Caco-2 (cell line): ENCODE measurements at regions of chr11 and their contacts with region 1.

Region 1: GRCh38 chr11:86955361-86956120 is at the start of gene FZD4:
- DNase-seq: peak; percentile 96 to 99
- H3K4me3 ChIP-seq: peak within 1 kb of the TSS; percentile 94
- H3K4me3 Mint-ChIP-seq: peak within 1 kb of the TSS; percentile 93
- H3K27ac Mint-ChIP-seq: peak within 1 kb of the TSS; percentile 90
- H3K4me1 ChIP-seq: peaks cover 15% of the 10 kb centered on the region
- H3K4me1 Mint-ChIP-seq: peaks cover 22% of the 10 kb centered on the region
- H3K27me3 ChIP-seq: no peaks in the 10 kb centered on the region
- H3K27me3 Mint-ChIP-seq: no peaks in the 10 kb centered on the region
- CTCF ChIP-seq: peak; percentile 5 to 64
- total RNA-seq, gene FZD4: 60.6 and 78.4 TPM in 2 replicates

Region 2: DNA sequence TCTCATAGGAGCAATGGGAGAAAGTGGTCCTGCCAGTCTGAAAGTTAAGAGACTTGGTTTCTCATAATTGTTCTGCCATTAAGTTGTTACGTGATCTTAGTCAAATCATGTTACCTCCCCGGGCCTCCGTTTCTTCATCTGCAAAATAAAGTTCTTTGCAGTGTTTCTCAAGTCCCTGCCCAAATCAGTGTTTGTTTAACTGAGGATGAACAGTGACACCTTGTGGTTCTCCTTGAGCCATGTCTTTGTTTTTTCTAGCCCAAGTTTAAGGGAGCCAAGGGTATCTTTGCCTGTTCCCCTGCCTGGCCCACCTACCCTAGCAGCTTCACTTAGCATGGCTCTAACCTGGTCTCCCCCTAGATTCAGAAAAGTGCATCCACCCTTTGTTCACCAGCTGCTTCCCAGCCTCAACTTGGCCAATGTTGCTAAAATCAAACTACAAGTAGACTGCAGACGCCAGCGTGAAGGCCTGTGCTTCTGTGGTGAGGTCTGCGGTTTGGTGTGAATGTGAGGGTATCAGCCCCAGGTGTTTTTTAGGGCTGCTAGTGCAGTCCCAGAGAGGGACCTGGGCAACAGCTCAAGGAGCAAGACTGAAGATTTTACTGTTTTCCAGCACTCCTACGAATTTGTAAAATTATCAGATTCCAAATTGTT is 35.9 kb before region 1 on chr11:
- CTCF ChIA-PET with region 1: no interaction called
- POLR2A ChIA-PET with region 1: interaction called, 10 read pairs
- intact Hi-C with region 1: loop called (anchors 1 kb)
- DNase-seq: peak; percentile 60 to 77
- H3K4me3 ChIP-seq: no peak overlapping the region
- H3K4me3 Mint-ChIP-seq: no peak overlapping the region
- H3K27ac Mint-ChIP-seq: no peak overlapping the region
- H3K4me1 ChIP-seq: peaks cover 32% of the 10 kb centered on the region
- H3K4me1 Mint-ChIP-seq: peaks cover 30% of the 10 kb centered on the region
- H3K27me3 ChIP-seq: no peaks in the 10 kb centered on the region
- H3K27me3 Mint-ChIP-seq: no peaks in the 10 kb centered on the region
- CTCF ChIP-seq: peak; percentile 91 to 95

Region 3: DNA sequence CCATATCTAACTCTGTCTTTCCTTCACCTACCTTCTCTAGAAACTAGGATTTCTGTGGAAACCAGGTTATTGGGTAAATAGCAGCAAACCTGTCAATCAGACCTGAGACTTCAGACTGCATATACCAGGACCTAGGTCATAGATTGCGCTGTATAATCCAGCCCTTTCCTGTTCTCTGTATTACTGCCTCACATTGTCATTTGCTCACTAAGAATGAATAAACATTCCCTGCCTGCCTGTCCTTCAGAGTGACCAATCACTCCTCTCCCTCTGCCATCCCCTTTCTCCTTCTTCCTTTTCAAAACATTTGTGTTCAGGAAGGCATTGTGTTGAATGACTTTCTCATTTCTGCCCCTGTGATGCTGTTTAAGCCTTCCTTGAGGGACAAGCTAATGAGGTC is 13.7 kb after region 1 on chr11:
- CTCF ChIA-PET with region 1: no interaction called
- POLR2A ChIA-PET with region 1: no interaction called
- intact Hi-C with region 1: loop called (anchors 1 kb)
- DNase-seq: no peak
- H3K4me3 ChIP-seq: no peak overlapping the region
- H3K4me3 Mint-ChIP-seq: no peak overlapping the region
- H3K27ac Mint-ChIP-seq: no peak overlapping the region
- H3K4me1 ChIP-seq: no peaks in the 10 kb centered on the region
- H3K4me1 Mint-ChIP-seq: no peaks in the 10 kb centered on the region
- H3K27me3 ChIP-seq: no peaks in the 10 kb centered on the region
- H3K27me3 Mint-ChIP-seq: no peaks in the 10 kb centered on the region
- CTCF ChIP-seq: no peak

Region 4: DNA sequence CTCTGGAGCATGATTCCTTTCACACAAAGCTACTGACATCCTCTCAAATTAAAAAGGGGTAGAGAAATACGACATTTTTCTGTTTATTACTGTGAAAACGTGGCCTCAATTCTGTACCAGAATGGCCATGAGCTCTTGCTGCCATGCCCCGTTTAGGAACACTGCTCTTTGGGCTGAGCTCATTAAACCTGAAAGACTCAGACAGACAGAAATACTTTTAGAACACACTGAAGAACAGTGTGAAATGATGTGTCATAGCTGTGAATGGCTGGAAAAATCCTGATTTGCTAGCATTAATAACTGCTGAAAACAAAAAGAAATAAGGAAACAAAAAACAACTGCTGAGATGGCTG is 50.0 kb after region 1 on chr11:
- CTCF ChIA-PET with region 1: interaction called, 32 read pairs
- POLR2A ChIA-PET with region 1: interaction called, 15 read pairs
- intact Hi-C with region 1: loop called (anchors 1 kb)
- DNase-seq: no peak
- H3K4me3 ChIP-seq: no peak overlapping the region
- H3K4me3 Mint-ChIP-seq: peak overlapping the region; percentile 66
- H3K27ac Mint-ChIP-seq: peak overlapping the region; percentile 93
- H3K4me1 ChIP-seq: peaks cover 42% of the 10 kb centered on the region
- H3K4me1 Mint-ChIP-seq: peaks cover 63% of the 10 kb centered on the region
- H3K27me3 ChIP-seq: no peaks in the 10 kb centered on the region
- H3K27me3 Mint-ChIP-seq: no peaks in the 10 kb centered on the region
- CTCF ChIP-seq: no peak

Region 5: GRCh38 chr11:87037450-87038234 is 82.1 kb after region 1 on chr11 and contains the start of gene TMEM135:
- CTCF ChIA-PET with region 1: interaction called, 25 read pairs
- POLR2A ChIA-PET with region 1: interaction called, 28 read pairs
- intact Hi-C with region 1: loop called (anchors 1 kb)
- DNase-seq: peak; percentile 99 to 100
- H3K4me3 ChIP-seq: peak within 1 kb of the TSS; percentile 83
- H3K4me3 Mint-ChIP-seq: peak within 1 kb of the TSS; percentile 97
- H3K27ac Mint-ChIP-seq: peak within 1 kb of the TSS; percentile 81
- H3K4me1 ChIP-seq: peaks cover 11% of the 10 kb centered on the region
- H3K4me1 Mint-ChIP-seq: peaks cover 59% of the 10 kb centered on the region
- H3K27me3 ChIP-seq: no peaks in the 10 kb centered on the region
- H3K27me3 Mint-ChIP-seq: no peaks in the 10 kb centered on the region
- CTCF ChIP-seq: peak in 1 of 2 experiments; percentile 62
- total RNA-seq, gene TMEM135: 88.6 and 95.2 TPM in 2 replicates

Region 6: GRCh38 chr11:87300640-87301380 is 345.3 kb after region 1 on chr11:
- CTCF ChIA-PET with region 1: interaction called, 10 read pairs
- POLR2A ChIA-PET with region 1: no interaction called
- intact Hi-C with region 1: no loop called
- DNase-seq: no peak
- H3K4me3 ChIP-seq: no peak overlapping the region
- H3K4me3 Mint-ChIP-seq: no peak overlapping the region
- H3K27ac Mint-ChIP-seq: no peak overlapping the region
- H3K4me1 ChIP-seq: no peaks in the 10 kb centered on the region
- H3K4me1 Mint-ChIP-seq: peaks cover 9% of the 10 kb centered on the region
- H3K27me3 ChIP-seq: no peaks in the 10 kb centered on the region
- H3K27me3 Mint-ChIP-seq: no peaks in the 10 kb centered on the region
- CTCF ChIP-seq: no peak